Right ventricle myocardium inferior (tissue), 1 donor: ENCODE measurements at regions of chr2 and their contacts with region 1.

Region 1: DNA sequence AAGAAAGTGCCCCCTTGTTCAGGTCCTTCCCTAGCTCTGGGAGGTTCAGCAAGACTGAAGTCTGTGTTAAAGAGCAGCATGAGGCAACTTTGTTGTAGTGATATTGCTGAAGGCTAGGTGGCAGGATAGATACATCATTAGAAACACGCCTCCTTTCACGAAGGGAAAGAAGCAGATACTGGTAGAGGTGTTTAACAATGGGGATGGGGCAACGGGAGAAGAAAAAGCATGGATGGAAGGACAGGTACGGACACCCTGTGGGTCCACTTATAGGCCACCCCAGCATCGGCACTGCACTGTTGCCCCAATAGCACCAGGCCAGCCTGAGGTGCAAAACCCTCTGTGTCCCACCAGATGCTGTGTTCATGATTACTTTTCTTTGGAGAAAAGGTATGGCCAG is 3.5 kb upstream of the IGFBP5 start:
- DNase-seq: peak; percentile 65
- ATAC-seq: peak; percentile 41

Region 2: DNA sequence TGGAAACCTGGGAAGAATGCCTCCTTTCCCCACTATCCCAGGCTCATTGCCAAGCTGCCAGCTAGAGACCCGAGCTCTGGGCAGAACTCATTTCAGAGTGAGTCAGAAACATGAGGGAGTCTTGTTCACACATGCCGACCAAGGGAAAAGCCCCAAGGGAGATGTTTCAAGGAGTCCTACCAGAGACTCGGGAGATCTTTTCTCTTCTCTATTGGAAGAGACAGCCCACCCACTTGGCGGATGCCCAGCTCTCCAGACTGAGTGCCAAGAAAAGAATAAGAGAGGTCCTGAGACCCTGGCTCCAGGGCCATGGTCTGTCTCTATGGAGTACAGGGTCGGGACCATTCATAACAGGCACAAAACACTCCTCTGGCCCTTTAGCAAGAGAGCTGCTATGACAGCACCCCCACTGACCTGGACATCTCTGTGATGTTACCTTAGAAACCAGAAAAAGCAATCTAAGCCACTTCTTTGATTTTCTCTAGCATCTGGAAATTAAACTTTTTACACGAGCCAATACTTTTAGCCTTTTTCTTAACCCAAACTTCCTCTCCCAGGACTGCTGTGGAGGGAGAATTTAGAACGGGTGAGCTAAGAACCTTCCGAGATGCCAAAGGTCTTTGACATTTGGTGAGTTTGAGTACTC is 14.9 kb after region 1 on chr2:
- intact Hi-C with region 1: no loop called
- DNase-seq: peak; percentile 79
- ATAC-seq: peak; percentile 74

Region 3: GRCh38 chr2:216777650-216778273 is 78.9 kb after region 1 on chr2:
- intact Hi-C with region 1: loop called (anchors 5 kb)
- DNase-seq: no peak
- ATAC-seq: no peak

Region 4: GRCh38 chr2:216849987-216850386 is 151.1 kb after region 1 on chr2:
- intact Hi-C with region 1: loop called (anchors 5 kb)
- DNase-seq: peak; percentile 66
- ATAC-seq: peak; percentile 80

Region 5: GRCh38 chr2:216897561-216898203 is 198.8 kb after region 1 on chr2:
- intact Hi-C with region 1: no loop called
- DNase-seq: no peak
- ATAC-seq: no peak

Region 6: DNA sequence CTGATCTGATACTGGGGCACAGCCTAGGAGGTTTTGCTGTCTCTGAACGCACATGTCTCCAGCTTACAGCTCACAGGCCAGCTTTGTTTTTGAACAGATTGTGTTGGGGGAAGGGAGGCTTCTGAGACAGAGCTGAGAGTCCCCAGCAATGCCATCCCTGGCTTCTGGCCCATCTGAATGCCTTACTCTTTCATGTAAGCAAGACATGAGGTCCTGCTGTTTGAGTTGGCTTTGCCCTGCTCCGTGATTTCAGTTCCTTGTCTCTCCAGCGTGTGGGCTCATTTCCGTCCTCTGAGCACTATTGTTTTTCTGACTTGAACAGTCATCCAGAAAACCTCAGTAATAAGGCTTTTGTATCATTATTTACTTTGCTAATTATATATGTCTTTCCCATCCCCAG is 355.9 kb after region 1 on chr2:
- intact Hi-C with region 1: loop called (anchors 10 kb)
- DNase-seq: no peak
- ATAC-seq: no peak

Region 7: GRCh38 chr2:217434181-217434975 is 735.5 kb after region 1 on chr2:
- intact Hi-C with region 1: loop called (anchors 10 kb)
- DNase-seq: peak; percentile 88
- ATAC-seq: peak; percentile 98

Region 8: DNA sequence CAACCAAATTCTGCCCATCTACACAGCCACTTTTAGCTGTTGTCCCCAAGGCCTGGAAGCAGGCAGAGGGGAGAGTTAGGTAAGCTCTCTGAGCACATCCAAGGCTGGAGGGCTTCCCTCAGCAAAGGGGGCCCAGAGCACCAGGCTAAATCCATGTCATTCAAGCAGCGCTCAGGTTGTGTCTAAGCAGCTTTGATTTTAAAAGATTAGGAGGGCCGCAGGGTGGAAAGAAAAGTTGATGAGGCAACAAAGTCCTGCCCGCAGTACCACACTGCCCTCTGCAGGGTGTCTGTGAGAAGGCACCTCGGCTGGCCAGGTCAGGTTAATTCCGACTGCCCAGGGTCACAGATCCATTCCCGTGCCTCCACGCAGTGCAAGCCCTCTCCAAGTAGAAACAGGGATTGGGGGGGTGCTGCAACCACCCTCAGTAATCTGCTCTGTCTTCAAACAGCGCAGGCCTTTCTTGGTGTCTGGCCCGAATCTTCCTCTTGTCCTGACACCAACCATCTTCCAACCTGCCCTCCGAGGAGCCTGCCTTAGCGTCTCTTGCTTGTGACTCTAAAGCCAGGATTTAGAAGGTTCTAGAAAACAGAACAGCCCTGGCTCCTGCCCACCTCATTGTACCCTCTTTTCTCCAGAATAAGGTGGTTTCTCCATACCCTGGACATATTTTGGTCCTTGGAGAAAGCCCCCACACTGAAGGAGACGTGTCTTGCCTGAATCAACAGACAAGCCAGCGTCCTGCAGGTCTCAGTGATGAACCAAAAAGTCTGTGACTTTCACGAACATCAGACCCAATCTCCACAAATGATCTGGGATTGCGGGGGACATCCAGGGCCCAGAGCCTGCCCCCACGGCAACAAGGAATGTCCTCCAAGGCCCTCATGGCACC is 1014.7 kb after region 1 on chr2:
- intact Hi-C with region 1: loop called (anchors 5 kb)
- DNase-seq: peak; percentile 80
- ATAC-seq: peak; percentile 83